CD4-positive, alpha-beta memory T cell (primary cell): ENCODE measurements at regions of chr2 and their contacts with region 1.

Region 1: DNA sequence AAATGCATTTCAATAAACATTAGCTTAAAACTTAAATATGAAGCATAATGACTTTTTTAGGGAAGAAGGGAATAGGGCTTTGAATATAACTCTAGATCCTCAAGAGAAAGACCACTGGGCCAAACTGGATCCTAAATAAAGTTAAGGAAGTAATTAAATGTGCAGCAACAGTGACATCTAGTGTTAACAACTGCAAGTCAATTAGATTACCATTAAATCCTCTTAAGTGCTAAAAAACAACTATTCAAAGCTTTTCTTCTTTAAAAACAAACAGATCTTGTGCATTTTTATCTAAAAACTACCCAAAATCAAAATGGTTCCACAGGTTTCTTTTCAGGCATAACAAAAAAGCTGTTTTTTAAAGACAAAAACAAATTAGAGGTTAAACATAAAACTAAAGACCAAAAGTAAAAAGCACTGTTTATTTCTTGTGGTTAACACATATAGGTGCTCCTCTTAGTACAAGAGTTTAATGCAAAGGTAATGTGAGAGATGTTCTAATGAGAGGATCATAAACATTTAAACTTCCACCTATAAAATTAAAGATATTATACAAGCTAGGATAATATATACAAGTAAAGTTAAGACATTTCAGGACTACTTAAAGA is 111.4 kb downstream of the THADA start:
- DNase-seq: peak in 4 of 5 donors; percentile 46 to 54 (median 52)
- H3K4me3 ChIP-seq: no peak overlapping the region
- H3K4me3 Mint-ChIP-seq: no peak overlapping the region
- H3K27ac ChIP-seq: no peak overlapping the region
- H3K27ac Mint-ChIP-seq: peak overlapping the region in 1 of 7 donors; percentile 22
- H3K4me1 ChIP-seq: peaks cover 4% of the 10 kb centered on the region
- H3K4me1 Mint-ChIP-seq: peaks cover 0 to 7% (median 4%) of the 10 kb centered on the region in 4 donors
- H3K27me3 ChIP-seq: no peaks in the 10 kb centered on the region
- H3K27me3 Mint-ChIP-seq: no peaks in the 10 kb centered on the region

Region 2: GRCh38 chr2:42859006-42859552 is 625.3 kb before region 1 on chr2:
- CTCF ChIA-PET with region 1: interaction called, 9 read pairs
- POLR2A ChIA-PET with region 1: no interaction called
- intact Hi-C with region 1: loop called (anchors 1 kb)
- DNase-seq: peak in 4 of 5 donors; percentile 26 to 55 (median 43)
- H3K4me3 ChIP-seq: no peak overlapping the region
- H3K4me3 Mint-ChIP-seq: no peak overlapping the region
- H3K27ac ChIP-seq: no peak overlapping the region
- H3K27ac Mint-ChIP-seq: no peak overlapping the region
- H3K4me1 ChIP-seq: no peaks in the 10 kb centered on the region
- H3K4me1 Mint-ChIP-seq: no peaks in the 10 kb centered on the region
- H3K27me3 ChIP-seq: no peaks in the 10 kb centered on the region
- H3K27me3 Mint-ChIP-seq: no peaks in the 10 kb centered on the region

Region 3: DNA sequence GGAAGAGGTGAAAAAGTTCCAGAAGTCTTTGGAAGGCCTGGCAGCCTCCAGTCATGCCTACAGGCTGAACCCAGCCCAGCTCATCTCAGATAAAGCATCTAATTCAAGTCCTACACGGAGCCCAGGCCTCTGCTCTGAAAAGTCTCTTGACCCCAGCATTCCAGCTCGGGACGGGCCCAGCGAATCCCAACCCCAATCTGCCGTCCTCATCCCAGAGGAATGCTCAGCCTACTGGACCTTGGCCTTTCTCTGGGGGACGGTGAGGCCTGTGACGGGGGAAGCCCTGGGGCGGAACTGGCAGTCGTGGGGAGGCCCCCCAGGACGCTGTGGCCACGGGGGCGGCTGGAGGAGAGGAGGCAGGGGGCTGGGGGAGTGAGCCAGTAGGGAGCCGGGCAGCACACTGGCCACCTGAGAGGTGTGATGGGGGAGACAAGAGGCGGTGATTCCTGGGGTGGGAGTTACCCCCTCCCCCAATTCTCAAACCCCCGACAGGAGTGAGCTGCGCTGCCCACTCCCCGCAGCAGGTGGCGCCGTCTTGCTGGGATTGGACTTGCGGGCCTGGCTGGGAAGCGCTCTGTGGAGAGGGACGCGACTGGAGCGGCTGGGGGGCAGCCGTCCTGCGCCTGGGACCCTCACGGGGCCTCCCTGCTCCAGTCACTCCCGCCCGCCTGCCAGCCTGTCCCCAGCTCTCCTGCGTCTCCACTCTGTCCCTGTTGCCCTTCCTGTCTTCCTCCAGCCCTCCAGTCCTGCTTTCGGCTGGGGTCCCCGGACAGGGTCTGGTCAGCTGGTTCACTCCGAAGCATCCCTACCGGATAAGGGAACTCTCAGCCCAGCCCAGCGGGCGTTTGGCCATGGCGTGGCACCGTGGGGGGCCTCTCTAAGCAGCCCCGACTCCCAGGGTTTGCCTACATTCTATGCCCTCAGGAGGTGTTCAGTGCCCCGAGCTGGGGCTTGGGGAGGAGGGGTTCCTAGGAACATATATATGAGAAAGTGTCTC is 509.4 kb before region 1 on chr2:
- CTCF ChIA-PET with region 1: interaction called, 75 read pairs
- POLR2A ChIA-PET with region 1: no interaction called
- intact Hi-C with region 1: loop called (anchors 1 kb)
- DNase-seq: peak in 4 of 5 donors; percentile 25 to 43 (median 29)
- H3K4me3 ChIP-seq: no peak overlapping the region
- H3K4me3 Mint-ChIP-seq: no peak overlapping the region
- H3K27ac ChIP-seq: no peak overlapping the region
- H3K27ac Mint-ChIP-seq: peak overlapping the region in 1 of 7 donors; percentile 50
- H3K4me1 ChIP-seq: no peaks in the 10 kb centered on the region
- H3K4me1 Mint-ChIP-seq: peaks cover 0 to 5% (median 3%) of the 10 kb centered on the region in 4 donors
- H3K27me3 ChIP-seq: no peaks in the 10 kb centered on the region
- H3K27me3 Mint-ChIP-seq: no peaks in the 10 kb centered on the region

Region 4: DNA sequence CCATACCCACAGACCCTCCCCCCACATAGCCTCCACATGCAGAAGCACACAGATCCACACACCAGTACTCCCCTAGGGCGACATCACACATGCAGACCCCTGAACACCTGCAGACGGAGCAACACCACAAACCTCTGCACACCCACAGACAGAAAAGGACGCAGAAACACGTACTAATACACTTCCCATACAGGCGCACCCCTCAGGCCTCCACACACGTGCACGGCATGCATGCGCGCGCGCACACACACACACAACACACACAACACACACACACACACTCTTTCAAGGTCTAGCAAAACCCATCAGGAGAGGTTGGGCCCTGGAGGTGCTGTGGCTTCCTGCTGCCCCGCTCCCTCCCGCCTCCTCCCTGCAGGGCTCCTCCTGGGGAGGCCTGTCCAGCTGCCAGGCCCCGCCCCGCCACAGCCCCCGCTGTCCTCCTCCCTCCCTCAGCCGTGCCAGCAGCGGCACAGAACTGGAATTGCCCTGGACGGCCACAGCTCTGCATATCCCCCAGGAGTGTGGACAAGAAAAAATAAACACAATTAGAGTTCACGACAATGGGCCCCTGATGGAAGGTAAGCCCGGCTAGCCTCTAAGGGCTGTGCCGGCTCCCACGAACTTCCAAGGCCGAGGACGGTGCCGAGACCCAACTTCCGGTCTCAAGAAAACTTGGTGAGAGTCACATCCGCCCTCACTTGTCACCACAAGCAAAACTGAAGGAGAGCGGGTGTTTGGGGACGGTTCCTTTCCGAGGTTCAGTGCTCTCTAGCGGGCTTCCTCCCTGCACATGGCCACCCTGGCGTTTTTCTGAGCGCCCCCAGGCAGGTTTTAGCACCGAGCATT is 264.8 kb before region 1 on chr2:
- CTCF ChIA-PET with region 1: no interaction called
- POLR2A ChIA-PET with region 1: interaction called, 13 read pairs
- intact Hi-C with region 1: no loop called
- DNase-seq: peak; percentile 88 to 92 (median 91)
- H3K4me3 ChIP-seq: peak overlapping the region; percentile 84 to 92
- H3K4me3 Mint-ChIP-seq: peak overlapping the region; percentile 80 to 98 (median 96)
- H3K27ac ChIP-seq: peak overlapping the region; percentile 90
- H3K27ac Mint-ChIP-seq: peak overlapping the region; percentile 93 to 100 (median 98)
- H3K4me1 ChIP-seq: peaks cover 60% of the 10 kb centered on the region
- H3K4me1 Mint-ChIP-seq: peaks cover 31 to 62% (median 40%) of the 10 kb centered on the region in 4 donors
- H3K27me3 ChIP-seq: no peaks in the 10 kb centered on the region
- H3K27me3 Mint-ChIP-seq: peaks cover 0 to 5% of the 10 kb centered on the region in 2 donors

Region 5: GRCh38 chr2:43519643-43520221 is 35.3 kb after region 1 on chr2:
- CTCF ChIA-PET with region 1: interaction called, 13 read pairs
- POLR2A ChIA-PET with region 1: no interaction called
- intact Hi-C with region 1: no loop called
- DNase-seq: no peak
- H3K4me3 ChIP-seq: no peak overlapping the region
- H3K4me3 Mint-ChIP-seq: no peak overlapping the region
- H3K27ac ChIP-seq: no peak overlapping the region
- H3K27ac Mint-ChIP-seq: peak overlapping the region in 5 of 7 donors; percentile 6 to 32 (median 16)
- H3K4me1 ChIP-seq: peaks cover 14% of the 10 kb centered on the region
- H3K4me1 Mint-ChIP-seq: peaks cover 24 to 50% (median 29%) of the 10 kb centered on the region in 4 donors
- H3K27me3 ChIP-seq: no peaks in the 10 kb centered on the region
- H3K27me3 Mint-ChIP-seq: no peaks in the 10 kb centered on the region